Right lobe of liver (tissue), 6 donors: ENCODE measurements at regions of chr12 and their contacts with region 1.

Region 1: DNA sequence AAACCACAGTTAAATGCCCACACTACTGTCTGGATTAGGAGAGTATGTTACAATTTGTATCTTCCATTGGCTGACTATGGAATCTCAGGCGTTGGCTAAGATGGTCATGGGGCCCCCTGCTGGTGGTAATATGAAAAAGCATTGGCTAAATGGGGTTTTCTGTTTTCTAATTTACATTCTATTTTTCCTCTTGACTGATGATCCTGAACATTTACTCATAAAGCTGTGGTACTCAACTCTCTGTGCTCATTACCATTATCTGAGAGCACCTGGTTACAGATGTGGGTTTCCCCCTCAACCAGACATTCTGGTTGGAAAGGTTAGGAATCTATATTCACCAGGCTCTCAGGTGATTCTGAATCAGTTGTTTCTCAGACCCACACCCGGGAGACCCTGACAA is 64.8 kb downstream of the WSCD2 start:
- DNase-seq: no peak
- ATAC-seq: peak; percentile 37 to 63 (median 42)
- H3K4me3 ChIP-seq: no peak overlapping the region
- H3K27ac ChIP-seq: no peak overlapping the region
- H3K4me1 ChIP-seq: no peaks in the 10 kb centered on the region
- H3K27me3 ChIP-seq: no peaks in the 10 kb centered on the region
- CTCF ChIP-seq: peak; percentile 57 to 84 (median 74)
- POLR2A ChIP-seq: no peak

Region 2: GRCh38 chr12:107670999-107671643 is 522.8 kb before region 1 on chr12:
- intact Hi-C with region 1: loop called in 1 of 2 experiments (anchors 10 kb)
- DNase-seq: peak; percentile 32 to 79 (median 54)
- ATAC-seq: peak; percentile 86 to 95 (median 90)
- H3K4me3 ChIP-seq: no peak overlapping the region
- H3K27ac ChIP-seq: peak overlapping the region in 1 of 3 donors; percentile 76
- H3K4me1 ChIP-seq: peaks cover 0 to 6% (median 0%) of the 10 kb centered on the region in 4 donors
- H3K27me3 ChIP-seq: no peaks in the 10 kb centered on the region
- CTCF ChIP-seq: peak; percentile 60 to 93 (median 73)
- POLR2A ChIP-seq: no peak

Region 3: GRCh38 chr12:107992870-107993451 is 201.0 kb before region 1 on chr12:
- intact Hi-C with region 1: loop called in 1 of 2 experiments (anchors 10 kb)
- DNase-seq: no peak
- ATAC-seq: peak; percentile 72 to 85 (median 80)
- H3K4me3 ChIP-seq: no peak overlapping the region
- H3K27ac ChIP-seq: no peak overlapping the region
- H3K4me1 ChIP-seq: no peaks in the 10 kb centered on the region
- H3K27me3 ChIP-seq: no peaks in the 10 kb centered on the region
- CTCF ChIP-seq: peak; percentile 31 to 47 (median 38)
- POLR2A ChIP-seq: no peak